ENCODE measurements at regions of chr1 and their contacts with region 1.

Region 1: GRCh38 chr1:6554031-6554906 is at the start of gene NOL9:
- DNase-seq: peak; percentile 96 to 98
- ATAC-seq: peak; percentile 96 to 98 (median 98)
- H3K4me3 ChIP-seq: peak within 1 kb of the TSS; percentile 99
- H3K27ac ChIP-seq: peak within 1 kb of the TSS; percentile 91
- H3K4me1 ChIP-seq: peaks cover 20% of the 10 kb centered on the region
- H3K27me3 ChIP-seq: no peaks in the 10 kb centered on the region
- CTCF ChIP-seq: peak; percentile 94
- total RNA-seq, gene NOL9: 17.1 to 26.1 (median 22.8) TPM

Region 2: GRCh38 chr1:6634371-6635052 is 80.2 kb after region 1 on chr1:
- intact Hi-C with region 1: loop called in 1 of 2 experiments (anchors 5 kb)
- DNase-seq: peak; percentile 72 to 89
- ATAC-seq: peak; percentile 84 to 90 (median 86)
- H3K4me3 ChIP-seq: no peak overlapping the region
- H3K27ac ChIP-seq: peak overlapping the region; percentile 9
- H3K4me1 ChIP-seq: peaks cover 6% of the 10 kb centered on the region
- H3K27me3 ChIP-seq: no peaks in the 10 kb centered on the region
- CTCF ChIP-seq: peak; percentile 56

Measured in psoas muscle (tissue), 8 donors.